Caco-2 (cell line): ENCODE measurements at regions of chr16 and their contacts with region 1.

Region 1: DNA sequence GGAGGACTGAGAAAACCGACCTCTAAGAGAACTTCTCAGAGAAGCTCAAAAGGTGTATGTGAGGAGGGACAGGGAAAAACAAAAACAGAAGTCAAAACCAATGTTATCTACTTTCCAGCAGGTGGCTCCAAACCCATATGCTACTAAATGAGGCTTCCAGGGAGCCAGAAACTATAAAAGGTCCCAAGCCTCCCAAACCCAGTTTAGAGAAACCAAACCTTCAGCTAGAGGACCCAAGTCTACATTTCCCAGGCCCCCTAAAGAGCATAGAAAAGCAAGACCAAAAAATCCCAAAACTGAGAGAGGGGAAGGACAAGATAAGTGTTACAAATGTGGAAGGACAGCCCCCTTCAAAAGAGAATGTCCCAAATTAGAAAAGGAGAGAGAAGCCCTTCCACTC is 3.7 kb downstream of the HPR start:
- DNase-seq: peak in 1 of 2 experiments; percentile 39
- H3K4me3 ChIP-seq: no peak overlapping the region
- H3K4me3 Mint-ChIP-seq: no peak overlapping the region
- H3K27ac Mint-ChIP-seq: no peak overlapping the region
- H3K4me1 ChIP-seq: no peaks in the 10 kb centered on the region; the same call in 1 of the 2 replicates
- H3K4me1 Mint-ChIP-seq: peaks cover 9% of the 10 kb centered on the region
- H3K27me3 ChIP-seq: no peaks in the 10 kb centered on the region
- H3K27me3 Mint-ChIP-seq: no peaks in the 10 kb centered on the region
- CTCF ChIP-seq: peak; percentile 73 to 74

Region 2: GRCh38 chr16:71867939-71868338 is 198.8 kb before region 1 on chr16:
- CTCF ChIA-PET with region 1: no interaction called
- POLR2A ChIA-PET with region 1: no interaction called
- intact Hi-C with region 1: no loop called
- DNase-seq: no peak
- H3K4me3 ChIP-seq: no peak overlapping the region
- H3K4me3 Mint-ChIP-seq: no peak overlapping the region
- H3K27ac Mint-ChIP-seq: no peak overlapping the region
- H3K4me1 ChIP-seq: no peaks in the 10 kb centered on the region
- H3K4me1 Mint-ChIP-seq: no peaks in the 10 kb centered on the region
- H3K27me3 ChIP-seq: no peaks in the 10 kb centered on the region
- H3K27me3 Mint-ChIP-seq: no peaks in the 10 kb centered on the region
- CTCF ChIP-seq: peak in 1 of 2 experiments; percentile 9

Region 3: DNA sequence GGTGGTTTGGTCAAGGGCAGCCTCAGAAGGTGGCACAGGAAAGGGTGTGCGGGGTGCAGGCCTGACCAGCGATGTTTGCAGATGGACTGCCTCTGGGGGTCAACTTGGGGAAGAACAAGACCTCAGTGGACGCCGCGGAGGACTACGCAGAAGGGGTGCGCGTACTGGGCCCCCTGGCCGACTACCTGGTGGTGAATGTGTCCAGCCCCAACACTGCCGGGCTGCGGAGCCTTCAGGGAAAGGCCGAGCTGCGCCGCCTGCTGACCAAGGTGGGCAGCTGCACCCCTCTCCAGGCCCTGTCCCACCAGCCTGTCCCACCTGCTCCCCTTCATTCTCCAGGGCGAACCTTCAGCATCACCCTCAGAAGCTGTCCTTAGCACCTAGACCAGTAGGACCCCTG is 45.7 kb before region 1 on chr16:
- CTCF ChIA-PET with region 1: no interaction called
- POLR2A ChIA-PET with region 1: no interaction called
- intact Hi-C with region 1: no loop called
- DNase-seq: peak in 1 of 2 experiments; percentile 24
- H3K4me3 ChIP-seq: no peak overlapping the region
- H3K4me3 Mint-ChIP-seq: no peak overlapping the region
- H3K27ac Mint-ChIP-seq: no peak overlapping the region
- H3K4me1 ChIP-seq: no peaks in the 10 kb centered on the region
- H3K4me1 Mint-ChIP-seq: peaks cover 8% of the 10 kb centered on the region
- H3K27me3 ChIP-seq: no peaks in the 10 kb centered on the region
- H3K27me3 Mint-ChIP-seq: no peaks in the 10 kb centered on the region
- CTCF ChIP-seq: peak; percentile 27 to 45

Region 4: GRCh38 chr16:72033437-72033836 is 33.3 kb before region 1 on chr16:
- CTCF ChIA-PET with region 1: no interaction called
- POLR2A ChIA-PET with region 1: no interaction called
- intact Hi-C with region 1: no loop called
- DNase-seq: no peak
- H3K4me3 ChIP-seq: no peak overlapping the region
- H3K4me3 Mint-ChIP-seq: no peak overlapping the region
- H3K27ac Mint-ChIP-seq: no peak overlapping the region
- H3K4me1 ChIP-seq: no peaks in the 10 kb centered on the region
- H3K4me1 Mint-ChIP-seq: no peaks in the 10 kb centered on the region
- H3K27me3 ChIP-seq: no peaks in the 10 kb centered on the region
- H3K27me3 Mint-ChIP-seq: no peaks in the 10 kb centered on the region
- CTCF ChIP-seq: no peak

Region 5: DNA sequence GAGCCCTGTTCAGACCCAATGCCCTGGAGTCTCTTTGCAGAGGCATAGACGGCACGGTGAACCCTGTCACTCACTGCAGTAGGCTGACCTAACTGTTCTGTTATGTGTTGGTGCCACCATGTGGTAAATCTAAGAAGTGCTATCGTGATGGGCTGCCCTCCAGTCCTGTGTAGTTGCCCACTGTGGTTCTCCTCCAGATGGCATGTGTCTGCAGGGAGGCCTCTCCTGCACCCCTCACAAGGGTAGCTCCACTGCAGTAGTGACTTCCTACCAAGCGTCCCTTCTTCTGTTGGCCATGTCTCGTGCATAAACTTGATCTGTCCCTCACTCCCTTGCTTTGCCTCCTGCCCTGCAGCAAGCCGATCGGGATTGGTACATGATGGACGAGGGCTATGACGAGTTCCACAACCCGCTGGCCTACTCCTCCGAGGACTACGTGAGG is 32.7 kb after region 1 on chr16:
- CTCF ChIA-PET with region 1: interaction called, 10 read pairs
- POLR2A ChIA-PET with region 1: no interaction called
- intact Hi-C with region 1: loop called (anchors 1 kb)
- DNase-seq: peak; percentile 70 to 80
- H3K4me3 ChIP-seq: no peak overlapping the region
- H3K4me3 Mint-ChIP-seq: no peak overlapping the region
- H3K27ac Mint-ChIP-seq: no peak overlapping the region
- H3K4me1 ChIP-seq: 0 out of 2 replicates have a peak, but pooled peaks cover 6% of the 10 kb centered on the region
- H3K4me1 Mint-ChIP-seq: peaks cover 9% of the 10 kb centered on the region
- H3K27me3 ChIP-seq: no peaks in the 10 kb centered on the region
- H3K27me3 Mint-ChIP-seq: no peaks in the 10 kb centered on the region
- CTCF ChIP-seq: peak; percentile 60 to 80

Region 6: GRCh38 chr16:72162105-72162692 is 95.5 kb after region 1 on chr16:
- CTCF ChIA-PET with region 1: no interaction called
- POLR2A ChIA-PET with region 1: no interaction called
- intact Hi-C with region 1: no loop called
- DNase-seq: no peak
- H3K4me3 ChIP-seq: no peak overlapping the region
- H3K4me3 Mint-ChIP-seq: no peak overlapping the region
- H3K27ac Mint-ChIP-seq: no peak overlapping the region
- H3K4me1 ChIP-seq: peaks cover 6% of the 10 kb centered on the region; the same call in 1 of the 2 replicates
- H3K4me1 Mint-ChIP-seq: no peaks in the 10 kb centered on the region
- H3K27me3 ChIP-seq: no peaks in the 10 kb centered on the region
- H3K27me3 Mint-ChIP-seq: no peaks in the 10 kb centered on the region
- CTCF ChIP-seq: no peak